CD8-positive, alpha-beta memory T cell (primary cell): ENCODE measurements at regions of chr4 and their contacts with region 1.

Region 1: DNA sequence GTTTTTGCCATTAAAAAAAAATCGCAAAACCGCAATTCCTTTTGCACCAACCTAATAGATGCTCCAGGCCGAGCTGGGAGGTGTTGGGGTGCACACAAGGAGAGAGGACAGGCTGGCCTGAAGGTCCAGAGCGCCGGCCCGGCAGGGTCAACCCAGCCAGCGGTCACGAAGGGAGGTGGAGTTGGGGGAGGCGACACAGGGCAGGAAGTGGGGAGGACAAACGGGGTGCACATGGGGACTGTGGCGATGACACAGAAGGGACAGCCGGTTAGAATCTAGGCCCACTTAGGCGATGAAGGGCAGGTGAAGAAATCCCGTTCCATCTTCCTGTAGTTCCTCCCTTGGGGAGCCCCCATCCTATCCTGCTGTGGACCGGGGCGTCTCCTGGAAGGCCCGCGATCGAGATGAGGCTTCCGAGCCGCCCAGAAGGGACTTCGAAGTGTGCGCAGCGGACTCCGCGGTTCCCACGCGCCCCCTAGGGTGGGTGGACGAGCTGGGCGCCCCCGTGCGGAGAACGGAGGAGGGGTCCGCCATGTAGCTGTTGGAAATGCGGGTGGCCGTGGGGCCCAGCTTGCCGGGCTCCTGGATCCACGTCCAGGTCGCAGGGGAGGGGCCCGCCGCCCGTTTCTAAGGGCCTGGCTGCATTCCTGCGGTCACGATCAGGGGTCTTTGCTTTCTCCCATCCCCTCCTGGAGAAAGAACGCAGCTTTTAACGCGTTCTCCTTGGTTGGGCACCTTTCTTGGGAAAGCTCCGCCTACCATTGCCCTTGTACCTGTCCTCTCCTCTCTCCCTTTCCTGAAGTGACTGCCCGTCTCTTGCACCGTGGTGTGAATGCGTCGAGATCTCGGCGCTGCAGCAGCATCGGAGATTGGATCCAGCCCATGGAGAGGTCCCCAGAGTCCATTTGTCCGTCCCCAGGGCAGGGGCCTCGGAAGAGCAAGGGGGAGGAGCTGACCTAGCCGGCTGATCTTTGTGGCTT is 17.0 kb upstream of the HPF1 start:
- DNase-seq: peak in 3 of 5 donors; percentile 16 to 51 (median 33)
- H3K4me3 ChIP-seq: no peak overlapping the region
- H3K4me3 Mint-ChIP-seq: peak overlapping the region in 4 of 7 donors; percentile 26 to 58 (median 52)
- H3K27ac ChIP-seq: no peak overlapping the region
- H3K27ac Mint-ChIP-seq: peak overlapping the region in 1 of 8 donors; percentile 84
- H3K4me1 ChIP-seq: no peaks in the 10 kb centered on the region
- H3K4me1 Mint-ChIP-seq: peaks cover 0 to 18% (median 6%) of the 10 kb centered on the region in 3 donors
- H3K27me3 ChIP-seq: peaks cover 8% of the 10 kb centered on the region
- H3K27me3 Mint-ChIP-seq: peaks cover 16 to 30% of the 10 kb centered on the region in 2 donors

Region 2: GRCh38 chr4:168551945-168552695 is 1222.6 kb before region 1 on chr4:
- CTCF ChIA-PET with region 1: no interaction called
- POLR2A ChIA-PET with region 1: interaction called, 14 read pairs
- DNase-seq: peak in 1 of 5 donors; percentile 10
- H3K4me3 ChIP-seq: no peak overlapping the region
- H3K4me3 Mint-ChIP-seq: no peak overlapping the region
- H3K27ac ChIP-seq: no peak overlapping the region
- H3K27ac Mint-ChIP-seq: no peak overlapping the region
- H3K4me1 ChIP-seq: no peaks in the 10 kb centered on the region
- H3K4me1 Mint-ChIP-seq: no peaks in the 10 kb centered on the region
- H3K27me3 ChIP-seq: no peaks in the 10 kb centered on the region
- H3K27me3 Mint-ChIP-seq: peaks cover 3 to 14% of the 10 kb centered on the region in 2 donors

Region 3: GRCh38 chr4:169510617-169511016 is 264.1 kb before region 1 on chr4:
- CTCF ChIA-PET with region 1: no interaction called
- POLR2A ChIA-PET with region 1: no interaction called
- DNase-seq: no peak
- H3K4me3 ChIP-seq: no peak overlapping the region
- H3K4me3 Mint-ChIP-seq: no peak overlapping the region
- H3K27ac ChIP-seq: no peak overlapping the region
- H3K27ac Mint-ChIP-seq: no peak overlapping the region
- H3K4me1 ChIP-seq: no peaks in the 10 kb centered on the region
- H3K4me1 Mint-ChIP-seq: peaks cover 0 to 4% (median 0%) of the 10 kb centered on the region in 3 donors
- H3K27me3 ChIP-seq: no peaks in the 10 kb centered on the region
- H3K27me3 Mint-ChIP-seq: no peaks in the 10 kb centered on the region